ENCODE measurements at regions of chr4 and their contacts with region 1.

Region 1: GRCh38 chr4:1726146-1726934 is 5.0 kb downstream of the TACC3 start:
- DNase-seq: peak; percentile 81
- H3K4me3 Mint-ChIP-seq: no peak overlapping the region
- H3K27ac Mint-ChIP-seq: peak overlapping the region; percentile 66
- H3K4me1 Mint-ChIP-seq: peaks cover 35% of the 10 kb centered on the region
- H3K27me3 Mint-ChIP-seq: no peaks in the 10 kb centered on the region

Region 2: GRCh38 chr4:1693129-1693896 is 33.0 kb before region 1 on chr4:
- intact Hi-C with region 1: loop called (anchors 1 kb)
- DNase-seq: peak; percentile 68
- H3K4me3 Mint-ChIP-seq: no peak overlapping the region
- H3K27ac Mint-ChIP-seq: peak overlapping the region; percentile 58
- H3K4me1 Mint-ChIP-seq: peaks cover 6% of the 10 kb centered on the region
- H3K27me3 Mint-ChIP-seq: no peaks in the 10 kb centered on the region

Region 3: GRCh38 chr4:1746265-1746691 is 19.9 kb after region 1 on chr4:
- intact Hi-C with region 1: no loop called
- DNase-seq: peak; percentile 69
- H3K4me3 Mint-ChIP-seq: no peak overlapping the region
- H3K27ac Mint-ChIP-seq: no peak overlapping the region
- H3K4me1 Mint-ChIP-seq: no peaks in the 10 kb centered on the region
- H3K27me3 Mint-ChIP-seq: no peaks in the 10 kb centered on the region

Region 4: GRCh38 chr4:1792832-1793495 is 66.6 kb after region 1 on chr4 and contains the start of gene FGFR3:
- intact Hi-C with region 1: no loop called
- DNase-seq: no peak
- H3K4me3 Mint-ChIP-seq: peak within 1 kb of the TSS; percentile 17
- H3K27ac Mint-ChIP-seq: no peak within 1 kb of the TSS
- H3K4me1 Mint-ChIP-seq: no peaks in the 10 kb centered on the region
- H3K27me3 Mint-ChIP-seq: peaks cover 18% of the 10 kb centered on the region
- total RNA-seq, gene FGFR3: 0.67 and 0.80 TPM in 2 replicates

Region 5: GRCh38 chr4:2101346-2102044 is 375.2 kb after region 1 on chr4:
- intact Hi-C with region 1: no loop called
- DNase-seq: no peak
- H3K4me3 Mint-ChIP-seq: no peak overlapping the region
- H3K27ac Mint-ChIP-seq: no peak overlapping the region
- H3K4me1 Mint-ChIP-seq: peaks cover 2% of the 10 kb centered on the region
- H3K27me3 Mint-ChIP-seq: peaks cover 4% of the 10 kb centered on the region